ENCODE measurements at regions of chr9 and their contacts with region 1.

Region 1: GRCh38 chr9:5450359-5451091 is at the start of gene CD274:
- DNase-seq: peak; percentile 92
- H3K4me3 Mint-ChIP-seq: peak within 1 kb of the TSS; percentile 84
- H3K27ac Mint-ChIP-seq: peak within 1 kb of the TSS; percentile 95
- H3K4me1 Mint-ChIP-seq: peaks cover 35% of the 10 kb centered on the region
- H3K27me3 Mint-ChIP-seq: no peaks in the 10 kb centered on the region
- CTCF ChIP-seq: peak; percentile 52
- total RNA-seq, gene CD274: 1.9 and 2.6 TPM in 2 replicates

Region 2: DNA sequence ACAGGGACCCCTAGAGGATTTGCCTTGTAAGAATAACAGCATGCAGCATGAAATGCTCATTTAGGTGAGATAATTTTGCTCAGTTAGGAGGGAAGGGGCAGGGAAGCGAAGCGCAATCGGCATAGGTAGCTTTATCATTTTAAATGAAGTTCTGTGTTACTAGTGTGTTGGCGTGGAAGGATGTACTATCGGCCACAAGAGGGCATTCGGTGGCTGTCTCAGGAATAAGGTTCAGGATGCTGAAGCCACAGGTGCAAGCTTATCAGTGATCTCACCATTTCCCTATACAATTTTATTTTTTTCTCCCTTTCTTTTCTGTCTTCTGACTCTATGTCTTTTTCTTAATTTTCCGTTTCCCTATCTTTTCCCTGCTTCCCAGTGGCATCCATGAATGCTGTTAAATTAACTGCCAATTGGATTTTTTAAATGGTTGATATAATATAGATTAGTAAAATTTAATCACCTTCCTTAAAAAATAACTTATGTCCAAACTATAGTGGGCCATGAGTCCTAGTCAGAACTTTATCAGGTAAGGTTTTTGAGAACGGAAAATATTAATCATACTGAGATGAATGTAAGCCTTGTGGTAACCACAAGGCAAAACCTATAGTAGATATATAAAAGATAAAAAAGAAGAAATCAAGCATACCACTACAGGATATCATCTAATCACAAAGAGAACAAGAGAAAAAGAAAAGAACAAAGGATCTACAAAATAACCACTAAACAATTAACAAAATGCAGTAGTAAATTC is 263.9 kb before region 1 on chr9:
- CTCF ChIA-PET with region 1: interaction called, 11 read pairs
- POLR2A ChIA-PET with region 1: interaction called, 4 read pairs
- intact Hi-C with region 1: no loop called
- DNase-seq: peak; percentile 75
- H3K4me3 Mint-ChIP-seq: no peak overlapping the region
- H3K27ac Mint-ChIP-seq: no peak overlapping the region
- H3K4me1 Mint-ChIP-seq: peaks cover 4% of the 10 kb centered on the region
- H3K27me3 Mint-ChIP-seq: peaks cover 26% of the 10 kb centered on the region
- CTCF ChIP-seq: peak; percentile 88

Region 3: DNA sequence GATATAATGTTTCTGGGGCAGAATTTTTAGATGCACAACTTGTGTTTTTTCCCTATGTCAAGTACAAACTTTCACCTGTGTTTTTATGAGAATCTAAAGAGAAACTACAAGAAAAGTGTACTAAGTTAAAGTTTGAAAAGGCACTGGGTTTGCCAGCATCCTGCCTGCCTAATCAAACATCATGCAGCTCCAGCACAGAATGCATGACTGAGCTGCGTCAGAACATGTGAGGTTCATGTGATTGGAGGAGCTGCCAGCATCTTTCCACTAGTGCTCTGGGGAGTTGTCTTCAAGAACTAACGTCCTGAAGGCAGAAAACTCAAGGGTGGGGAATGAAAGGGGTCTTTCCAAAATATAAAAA is 132.3 kb after region 1 on chr9:
- CTCF ChIA-PET with region 1: interaction called, 62 read pairs
- POLR2A ChIA-PET with region 1: interaction called, 21 read pairs
- intact Hi-C with region 1: no loop called
- DNase-seq: no peak
- H3K4me3 Mint-ChIP-seq: no peak overlapping the region
- H3K27ac Mint-ChIP-seq: no peak overlapping the region
- H3K4me1 Mint-ChIP-seq: no peaks in the 10 kb centered on the region
- H3K27me3 Mint-ChIP-seq: no peaks in the 10 kb centered on the region
- CTCF ChIP-seq: no peak

Region 4: GRCh38 chr9:5593904-5594303 is 143.4 kb after region 1 on chr9:
- CTCF ChIA-PET with region 1: interaction called, 62 read pairs
- POLR2A ChIA-PET with region 1: interaction called, 21 read pairs
- intact Hi-C with region 1: loop called (anchors 1 kb)
- DNase-seq: no peak
- H3K4me3 Mint-ChIP-seq: no peak overlapping the region
- H3K27ac Mint-ChIP-seq: no peak overlapping the region
- H3K4me1 Mint-ChIP-seq: no peaks in the 10 kb centered on the region
- H3K27me3 Mint-ChIP-seq: no peaks in the 10 kb centered on the region
- CTCF ChIP-seq: no peak

Region 5: DNA sequence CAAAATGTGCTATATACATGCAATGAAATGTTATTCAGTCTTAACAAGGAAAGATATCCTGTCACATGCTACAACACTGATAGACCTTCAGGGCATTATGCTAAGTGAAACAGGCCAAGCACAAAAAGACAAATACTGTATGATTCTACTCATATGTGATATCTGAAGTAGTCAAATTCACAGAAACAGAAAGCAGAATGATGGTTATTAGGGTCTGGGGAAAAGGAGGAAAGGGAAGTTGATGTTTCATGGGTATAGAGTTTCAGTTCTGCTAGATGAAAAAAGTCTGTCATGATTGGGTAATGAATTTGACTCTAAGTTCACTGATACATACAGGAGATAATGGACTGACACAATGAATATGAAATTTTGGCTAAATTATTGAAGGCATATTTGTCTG is 167.2 kb after region 1 on chr9:
- CTCF ChIA-PET with region 1: interaction called, 4 read pairs
- POLR2A ChIA-PET with region 1: interaction called, 10 read pairs
- intact Hi-C with region 1: no loop called
- DNase-seq: no peak
- H3K4me3 Mint-ChIP-seq: no peak overlapping the region
- H3K27ac Mint-ChIP-seq: no peak overlapping the region
- H3K4me1 Mint-ChIP-seq: peaks cover 6% of the 10 kb centered on the region
- H3K27me3 Mint-ChIP-seq: no peaks in the 10 kb centered on the region
- CTCF ChIP-seq: no peak

Region 6: DNA sequence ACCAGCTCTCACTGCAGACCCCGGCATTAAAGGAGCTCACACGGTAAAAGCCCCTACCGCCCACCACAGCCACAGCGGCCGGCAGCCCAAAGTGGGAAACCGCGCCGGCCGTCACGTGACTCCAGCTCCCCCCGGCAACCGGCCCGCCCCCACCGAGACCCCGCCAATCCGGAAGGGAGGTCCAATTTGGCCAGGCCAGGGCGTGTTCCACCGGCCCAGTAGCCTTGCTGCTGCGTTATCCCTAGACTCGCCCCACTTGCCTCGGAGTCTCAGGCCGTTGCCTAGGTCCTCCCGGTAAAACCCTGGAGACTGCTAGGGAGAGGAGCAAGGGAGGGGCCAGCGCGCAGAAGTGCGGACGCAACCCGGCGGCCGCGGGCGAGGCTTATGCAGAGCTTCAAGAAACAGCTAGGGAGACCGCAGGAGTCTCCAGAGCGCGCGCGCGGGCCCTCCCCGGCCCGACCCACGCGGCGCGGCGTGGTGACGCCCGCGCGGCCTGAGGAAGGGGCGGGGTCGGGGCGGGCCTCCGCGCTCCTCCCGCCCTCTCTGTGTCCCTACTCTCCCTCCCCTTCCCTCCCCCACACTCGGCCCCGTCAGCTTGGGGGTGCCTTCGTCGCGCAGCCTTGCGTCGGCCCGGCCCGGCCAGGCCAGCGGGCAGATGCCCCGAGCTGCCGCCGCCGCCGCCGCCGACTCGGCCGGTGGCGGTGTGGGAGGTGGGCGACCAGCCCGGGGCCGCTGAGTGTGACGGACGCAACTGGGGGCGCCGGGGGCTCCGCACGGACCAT is 178.2 kb after region 1 on chr9 and contains the start of gene RIC1:
- CTCF ChIA-PET with region 1: interaction called, 5 read pairs
- POLR2A ChIA-PET with region 1: interaction called, 11 read pairs
- intact Hi-C with region 1: no loop called
- DNase-seq: peak; percentile 89
- H3K4me3 Mint-ChIP-seq: peak within 1 kb of the TSS; percentile 88
- H3K27ac Mint-ChIP-seq: peak within 1 kb of the TSS; percentile 92
- H3K4me1 Mint-ChIP-seq: peaks cover 20% of the 10 kb centered on the region
- H3K27me3 Mint-ChIP-seq: no peaks in the 10 kb centered on the region
- CTCF ChIP-seq: no peak
- total RNA-seq, gene RIC1: 21.3 and 23.1 TPM in 2 replicates

Region 7: DNA sequence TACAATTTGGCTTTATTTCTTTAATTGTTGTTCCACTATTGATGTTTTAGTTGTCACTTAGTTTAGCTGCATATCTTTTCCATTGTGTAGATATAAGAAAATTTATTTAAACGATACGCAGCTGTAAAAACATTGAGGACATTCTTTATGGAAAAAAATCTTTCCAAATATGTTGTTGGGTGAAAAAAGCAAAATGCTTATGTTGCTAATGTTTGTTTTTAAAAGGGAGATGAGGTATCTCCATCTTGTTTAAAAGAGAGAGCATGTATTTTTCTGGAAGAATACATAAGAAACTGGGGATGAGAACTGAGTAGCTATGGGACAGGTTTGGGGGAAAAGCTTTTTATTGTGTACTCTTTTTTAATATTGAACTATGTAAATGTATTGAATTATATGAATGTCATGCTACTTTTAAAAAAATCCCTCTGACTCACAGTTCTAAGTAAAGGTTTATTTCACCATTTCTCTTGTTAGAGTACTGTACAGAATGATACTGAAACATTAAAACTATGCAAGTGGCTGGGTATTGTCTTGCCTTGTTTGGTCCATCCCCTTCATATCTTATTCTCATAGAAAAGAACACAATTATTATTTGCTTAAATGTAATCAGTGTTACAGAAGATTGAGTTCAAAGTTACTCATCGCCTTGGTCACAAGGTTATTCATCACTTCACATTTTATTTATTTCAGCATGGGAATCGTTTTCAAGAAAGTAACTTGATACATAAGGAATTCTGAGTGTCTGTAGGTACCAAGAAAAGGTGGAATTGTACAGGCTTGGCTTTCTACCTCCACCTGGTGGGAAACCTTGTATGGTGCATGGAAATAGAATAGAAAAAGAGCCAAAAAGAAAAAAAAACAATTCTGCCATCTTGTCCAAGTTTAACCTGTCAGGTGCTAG is 264.2 kb after region 1 on chr9:
- CTCF ChIA-PET with region 1: interaction called, 7 read pairs
- POLR2A ChIA-PET with region 1: interaction called, 5 read pairs
- intact Hi-C with region 1: loop called (anchors 1 kb)
- DNase-seq: peak; percentile 60
- H3K4me3 Mint-ChIP-seq: no peak overlapping the region
- H3K27ac Mint-ChIP-seq: peak overlapping the region; percentile 47
- H3K4me1 Mint-ChIP-seq: peaks cover 6% of the 10 kb centered on the region
- H3K27me3 Mint-ChIP-seq: no peaks in the 10 kb centered on the region
- CTCF ChIP-seq: peak; percentile 70